Dendritic cell treated with granulocyte-macrophage colony-stimulating factor and Interleukin-4, amounts not matched to agents 40 ng/mL and 50 ng/mL, for 4 days (primary cell): ENCODE measurements at regions of chr7 and their contacts with region 1.

Region 1: GRCh38 chr7:140810830-140811556 is 113.7 kb downstream of the BRAF start:
- H3K4me3 Mint-ChIP-seq: no peak overlapping the region
- H3K27ac Mint-ChIP-seq: no peak overlapping the region
- H3K4me1 Mint-ChIP-seq: peaks cover 5% of the 10 kb centered on the region
- H3K27me3 Mint-ChIP-seq: no peaks in the 10 kb centered on the region

Region 2: GRCh38 chr7:140857048-140857447 is 46.1 kb after region 1 on chr7:
- intact Hi-C with region 1: no loop called
- H3K4me3 Mint-ChIP-seq: no peak overlapping the region
- H3K27ac Mint-ChIP-seq: no peak overlapping the region
- H3K4me1 Mint-ChIP-seq: peaks cover 5% of the 10 kb centered on the region
- H3K27me3 Mint-ChIP-seq: no peaks in the 10 kb centered on the region

Region 3: GRCh38 chr7:140983802-140984201 is 172.8 kb after region 1 on chr7:
- intact Hi-C with region 1: loop called (anchors 2 kb)
- H3K4me3 Mint-ChIP-seq: no peak overlapping the region
- H3K27ac Mint-ChIP-seq: no peak overlapping the region
- H3K4me1 Mint-ChIP-seq: peaks cover 19% of the 10 kb centered on the region
- H3K27me3 Mint-ChIP-seq: no peaks in the 10 kb centered on the region

Region 4: DNA sequence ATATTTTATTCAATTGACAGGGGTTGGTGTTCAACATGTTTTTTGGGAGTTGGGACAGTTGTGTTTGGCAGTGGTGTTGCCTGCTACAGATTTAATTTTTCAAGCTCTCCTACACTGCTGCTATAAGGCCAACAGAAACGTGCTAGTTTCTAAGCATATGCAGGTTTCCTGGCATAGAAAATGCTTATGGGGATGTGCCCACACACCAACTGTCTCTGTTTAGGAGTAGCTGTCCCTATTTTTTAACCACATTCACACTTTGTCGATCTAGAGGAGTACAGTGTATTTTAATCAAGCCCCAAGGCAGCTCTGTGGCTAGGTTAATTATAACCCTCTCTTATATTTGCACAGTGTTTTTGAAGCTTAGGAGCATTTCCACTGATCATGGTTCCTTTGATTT is 291.4 kb after region 1 on chr7:
- intact Hi-C with region 1: no loop called
- H3K4me3 Mint-ChIP-seq: no peak overlapping the region
- H3K27ac Mint-ChIP-seq: no peak overlapping the region
- H3K4me1 Mint-ChIP-seq: no peaks in the 10 kb centered on the region
- H3K27me3 Mint-ChIP-seq: no peaks in the 10 kb centered on the region

Region 5: DNA sequence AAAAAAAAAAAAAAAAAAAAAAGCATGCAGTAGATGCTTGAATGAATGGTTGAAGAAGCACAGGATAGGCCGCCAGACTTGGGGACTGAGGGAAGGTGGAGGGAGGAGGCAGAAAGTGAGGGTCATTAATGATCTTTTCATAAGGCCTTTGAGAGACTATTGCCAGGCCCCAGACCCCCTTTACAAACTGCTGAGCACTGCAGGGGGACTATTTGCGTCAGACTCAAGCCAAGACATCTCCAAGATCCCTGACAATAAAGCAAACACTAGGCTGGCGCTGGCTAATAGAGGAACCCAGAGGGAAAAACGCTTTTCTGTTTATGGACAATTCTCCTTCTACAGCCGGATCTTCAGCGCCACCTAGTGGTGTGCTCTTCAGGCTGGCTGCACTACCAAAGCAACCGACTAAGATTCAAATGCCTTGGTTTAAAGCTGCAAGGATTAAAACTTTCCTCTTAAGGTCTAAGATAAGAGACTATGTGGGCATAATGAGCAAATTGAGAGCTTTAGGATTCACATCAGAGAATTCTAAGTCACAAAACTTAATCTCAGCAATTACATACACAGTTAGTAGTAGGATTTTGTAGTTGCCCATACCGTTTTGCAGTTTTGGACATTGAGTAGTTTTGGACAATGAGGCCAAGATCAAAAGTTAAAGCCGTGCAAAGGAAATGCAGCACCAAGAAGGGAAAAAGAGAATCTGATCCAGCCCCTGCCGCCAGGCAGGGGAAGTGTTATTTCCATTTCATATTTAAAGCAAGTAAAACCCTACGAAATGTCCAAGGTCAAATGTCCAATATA is 722.4 kb after region 1 on chr7:
- intact Hi-C with region 1: loop called (anchors 2 kb)
- H3K4me3 Mint-ChIP-seq: no peak overlapping the region
- H3K27ac Mint-ChIP-seq: no peak overlapping the region
- H3K4me1 Mint-ChIP-seq: no peaks in the 10 kb centered on the region
- H3K27me3 Mint-ChIP-seq: peaks cover 16% of the 10 kb centered on the region